Activated T-helper 1 cell treated with anti-CD3 and anti-CD28 coated beads, Interleukin-12 subunit alpha, Interleukin-12 subunit beta, Interleukin-2, Interleukin-4 antibody, amounts not matched to agents 30 ng/mL and 10 ng/mL and 1 ng/mL, durations not matched to agents 14 hours and 24 hours and 36 hours (primary cell): ENCODE measurements at regions of chrX and their contacts with region 1.

Region 1: DNA sequence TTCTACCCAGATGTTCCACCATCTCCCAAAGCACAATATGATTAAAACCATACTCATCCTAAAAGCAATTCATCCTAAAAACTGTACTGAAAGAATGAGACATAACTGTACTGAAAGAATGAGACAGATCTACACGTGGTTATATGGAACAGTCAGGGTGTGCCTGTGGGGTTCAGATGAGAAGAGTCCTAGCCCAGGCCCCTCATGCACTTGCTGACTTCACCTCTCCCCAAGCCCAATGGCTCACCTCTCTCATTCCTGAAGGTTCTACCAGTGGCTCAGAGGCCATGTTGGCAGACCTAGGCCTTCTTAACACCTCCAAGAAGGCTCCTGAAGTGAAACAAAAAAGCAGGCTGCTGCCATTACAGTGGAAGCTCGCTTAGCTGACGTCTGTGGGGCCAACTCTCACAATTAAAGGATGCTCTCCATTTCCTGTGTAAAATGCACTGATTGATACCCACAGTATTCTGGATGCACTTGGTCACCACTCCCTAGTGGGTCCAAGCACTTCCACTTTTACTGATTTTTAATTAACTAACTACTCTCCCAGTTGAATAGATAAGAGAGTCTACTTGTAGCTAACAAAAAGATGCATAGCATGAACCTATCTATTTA is 3.8 kb downstream of the PLAC1 start:
- DNase-seq: no peak
- H3K4me3 Mint-ChIP-seq: no peak overlapping the region
- H3K27ac Mint-ChIP-seq: no peak overlapping the region
- H3K4me1 Mint-ChIP-seq: no peaks in the 10 kb centered on the region
- H3K27me3 Mint-ChIP-seq: peaks cover 1% of the 10 kb centered on the region

Region 2: DNA sequence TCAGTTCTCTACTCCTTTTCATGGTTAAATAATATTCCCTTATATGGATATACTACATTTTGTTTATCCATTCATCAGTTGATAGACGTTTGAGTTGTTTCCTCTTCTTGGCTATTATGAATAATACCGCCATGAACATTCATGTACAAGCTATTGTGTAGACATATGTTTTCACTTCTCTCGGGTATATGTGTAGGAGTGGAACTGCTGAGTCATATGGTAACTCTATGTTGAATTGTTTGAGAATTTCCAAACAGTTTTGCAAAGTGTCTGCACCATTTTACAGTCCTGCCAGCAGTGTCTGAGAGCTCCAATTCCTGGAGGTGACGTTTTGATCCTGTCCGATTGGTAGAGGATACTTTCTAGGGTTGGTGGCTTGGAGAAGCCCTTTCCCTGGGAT is 19.8 kb before region 1 on chrX:
- intact Hi-C with region 1: loop called (anchors 1 kb)
- DNase-seq: no peak
- H3K4me3 Mint-ChIP-seq: no peak overlapping the region
- H3K27ac Mint-ChIP-seq: no peak overlapping the region
- H3K4me1 Mint-ChIP-seq: peaks cover 7% of the 10 kb centered on the region
- H3K27me3 Mint-ChIP-seq: peaks cover 2% of the 10 kb centered on the region